Mammary epithelial cell (primary cell): ENCODE measurements at regions of chr6 and their contacts with region 1.

Region 1: GRCh38 chr6:15691250-15691869 is 28.5 kb upstream of the DTNBP1 start:
- DNase-seq: peak; percentile 73
- H3K4me3 ChIP-seq: no peak overlapping the region
- H3K27ac ChIP-seq: no peak overlapping the region
- H3K4me1 ChIP-seq: no peaks in the 10 kb centered on the region
- H3K27me3 ChIP-seq: no peaks in the 10 kb centered on the region
- CTCF ChIP-seq: peak; percentile 100

Region 2: GRCh38 chr6:15893556-15894268 is 202.4 kb after region 1 on chr6:
- CTCF ChIA-PET with region 1: no interaction called
- dilution Hi-C with region 1: no loop called
- in situ Hi-C with region 1: no loop called
- intact Hi-C with region 1: loop called (anchors 1 kb)
- DNase-seq: peak; percentile 35
- H3K4me3 ChIP-seq: no peak overlapping the region
- H3K27ac ChIP-seq: no peak overlapping the region
- H3K4me1 ChIP-seq: no peaks in the 10 kb centered on the region
- H3K27me3 ChIP-seq: no peaks in the 10 kb centered on the region
- CTCF ChIP-seq: peak; percentile 41 to 63

Region 3: GRCh38 chr6:16043171-16044135 is 352.1 kb after region 1 on chr6:
- CTCF ChIA-PET with region 1: no interaction called
- dilution Hi-C with region 1: no loop called
- in situ Hi-C with region 1: no loop called
- intact Hi-C with region 1: no loop called
- DNase-seq: no peak
- H3K4me3 ChIP-seq: no peak overlapping the region
- H3K27ac ChIP-seq: no peak overlapping the region
- H3K4me1 ChIP-seq: no peaks in the 10 kb centered on the region
- H3K27me3 ChIP-seq: no peaks in the 10 kb centered on the region
- CTCF ChIP-seq: no peak

Region 4: GRCh38 chr6:16128759-16129622 is 437.6 kb after region 1 on chr6 and contains the start of gene MYLIP:
- CTCF ChIA-PET with region 1: interaction called, 3 read pairs
- dilution Hi-C with region 1: no loop called
- in situ Hi-C with region 1: no loop called
- intact Hi-C with region 1: loop called (anchors 1 kb)
- DNase-seq: peak; percentile 87
- H3K4me3 ChIP-seq: peak within 1 kb of the TSS; percentile 56 to 81 (median 71)
- H3K27ac ChIP-seq: no peak within 1 kb of the TSS
- H3K4me1 ChIP-seq: peaks cover 17% of the 10 kb centered on the region
- H3K27me3 ChIP-seq: no peaks in the 10 kb centered on the region
- CTCF ChIP-seq: peak; percentile 19 to 59
- total RNA-seq, gene MYLIP: 3.7 to 5.0 TPM

Region 5: GRCh38 chr6:16183187-16183664 is 491.9 kb after region 1 on chr6:
- CTCF ChIA-PET with region 1: interaction called, 14 read pairs
- dilution Hi-C with region 1: loop called (anchors 25 kb)
- in situ Hi-C with region 1: loop called (anchors 5 to 10 kb)
- intact Hi-C with region 1: loop called (anchors 1 kb)
- DNase-seq: peak; percentile 19
- H3K4me3 ChIP-seq: no peak overlapping the region
- H3K27ac ChIP-seq: no peak overlapping the region
- H3K4me1 ChIP-seq: peaks cover 6% of the 10 kb centered on the region
- H3K27me3 ChIP-seq: no peaks in the 10 kb centered on the region
- CTCF ChIP-seq: peak; percentile 61 to 63

Region 6: DNA sequence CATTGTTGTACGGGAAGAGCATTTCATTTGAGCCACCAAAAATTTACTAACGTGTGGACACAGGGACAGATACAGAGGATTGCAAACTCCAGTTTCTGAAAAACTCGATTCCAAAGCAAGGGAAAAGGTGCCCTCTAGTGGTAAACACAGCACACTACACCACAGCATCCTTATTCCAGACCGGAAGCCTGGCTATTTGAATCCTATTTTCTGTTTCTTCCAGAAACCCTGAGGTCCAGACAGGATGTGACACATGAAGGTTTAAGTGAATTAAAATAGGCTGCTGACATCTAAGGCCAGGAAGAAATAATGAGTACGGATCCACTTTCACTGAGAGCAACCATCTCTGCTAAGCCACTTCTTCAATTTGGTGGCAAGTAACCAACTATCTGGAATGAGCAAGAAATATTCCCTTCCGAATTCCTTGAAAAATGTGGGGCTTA is 515.3 kb after region 1 on chr6:
- CTCF ChIA-PET with region 1: no interaction called
- dilution Hi-C with region 1: no loop called
- in situ Hi-C with region 1: no loop called
- intact Hi-C with region 1: loop called (anchors 1 kb)
- DNase-seq: peak; percentile 64
- H3K4me3 ChIP-seq: no peak overlapping the region
- H3K27ac ChIP-seq: no peak overlapping the region
- H3K4me1 ChIP-seq: no peaks in the 10 kb centered on the region
- H3K27me3 ChIP-seq: no peaks in the 10 kb centered on the region
- CTCF ChIP-seq: peak; percentile 86 to 97

Region 7: GRCh38 chr6:16277101-16277981 is 586.0 kb after region 1 on chr6:
- CTCF ChIA-PET with region 1: no interaction called
- dilution Hi-C with region 1: no loop called
- in situ Hi-C with region 1: no loop called
- intact Hi-C with region 1: loop called (anchors 5 kb)
- DNase-seq: peak; percentile 84
- H3K4me3 ChIP-seq: peak overlapping the region in 1 of 3 experiments; percentile 8
- H3K27ac ChIP-seq: peak overlapping the region; percentile 31
- H3K4me1 ChIP-seq: peaks cover 15% of the 10 kb centered on the region
- H3K27me3 ChIP-seq: no peaks in the 10 kb centered on the region
- CTCF ChIP-seq: peak; percentile 57 to 79